Activated CD4-positive, alpha-beta memory T cell treated with anti-CD3 and anti-CD28 coated beads for 36 hours (primary cell): ENCODE measurements at regions of chr14 and their contacts with region 1.

Region 1: DNA sequence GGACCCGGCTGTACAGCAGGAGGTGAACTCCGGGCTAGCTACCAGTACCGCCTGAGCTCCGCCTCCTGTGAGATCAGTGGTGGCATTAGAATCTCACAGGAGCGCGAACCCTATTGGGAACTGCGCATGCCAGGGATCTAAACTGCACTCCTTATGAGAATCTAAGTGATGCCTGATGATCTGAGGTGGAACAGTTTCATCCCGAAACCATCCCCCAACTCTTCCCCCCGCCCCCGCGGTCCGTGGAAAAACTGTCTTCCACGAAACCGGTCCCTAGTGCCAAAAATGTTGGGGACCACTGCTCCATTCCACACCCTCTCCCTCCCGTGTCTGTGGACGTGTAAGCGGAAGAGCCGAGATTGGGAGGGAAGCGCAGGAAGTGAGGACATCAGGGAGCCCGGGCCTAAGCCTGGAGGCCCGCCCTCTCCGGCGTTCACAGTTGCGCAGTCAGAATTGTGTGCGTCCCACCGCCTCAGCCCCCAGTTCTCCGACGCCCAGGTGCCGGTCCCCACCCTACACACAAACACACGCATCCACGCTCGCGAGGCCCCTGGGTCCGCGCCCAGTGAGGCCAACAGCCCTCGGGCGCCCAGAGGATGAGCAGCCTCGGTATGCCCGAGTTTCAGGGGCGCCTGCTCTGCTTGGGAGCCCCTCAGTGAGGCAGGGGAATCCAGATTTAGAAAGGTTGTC is 1.8 kb upstream of the RNASE4 start:
- DNase-seq: peak; percentile 85
- H3K4me3 Mint-ChIP-seq: no peak overlapping the region
- H3K27ac Mint-ChIP-seq: no peak overlapping the region
- H3K4me1 Mint-ChIP-seq: peaks cover 27% of the 10 kb centered on the region
- H3K27me3 Mint-ChIP-seq: no peaks in the 10 kb centered on the region

Region 2: DNA sequence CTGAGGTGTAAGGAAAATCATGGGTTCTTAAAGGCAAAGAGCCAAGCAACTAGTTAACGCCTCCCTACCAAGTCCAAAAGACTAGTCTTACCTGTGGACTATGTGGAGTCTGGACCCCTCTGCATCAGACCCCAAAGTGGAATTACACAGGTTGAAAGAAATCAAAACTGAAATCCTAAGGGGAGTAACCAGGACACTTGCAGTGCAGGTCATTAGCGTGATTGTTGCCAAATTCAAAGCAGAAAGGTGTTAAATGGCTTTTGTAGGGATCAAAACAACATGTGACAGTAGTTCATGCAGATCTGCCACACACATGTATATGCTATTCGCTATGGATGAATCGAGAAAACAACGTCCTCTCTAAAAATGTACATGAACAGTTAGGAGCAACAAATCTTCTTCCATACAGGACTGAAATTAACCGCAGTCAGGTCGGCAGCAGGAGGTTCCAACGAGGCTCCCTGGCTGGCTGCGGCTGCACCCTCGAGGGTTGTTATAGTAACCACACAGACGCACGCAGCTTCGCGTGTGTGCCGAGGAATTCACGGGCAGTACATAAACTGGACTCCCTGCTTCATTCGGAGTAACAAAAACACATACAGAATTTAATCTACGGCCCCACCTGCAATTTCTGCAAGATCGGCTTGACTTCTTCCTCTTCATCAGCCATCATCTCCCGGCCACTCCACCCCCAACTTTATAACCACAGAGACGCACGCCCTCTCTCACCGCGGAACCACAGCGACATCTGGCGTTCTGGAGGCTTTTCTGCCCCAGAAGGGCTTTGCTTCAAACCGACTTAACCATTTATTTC is 377.1 kb before region 1 on chr14 and contains the start of gene TTC5:
- CTCF ChIA-PET with region 1: interaction called, 3 read pairs
- POLR2A ChIA-PET with region 1: no interaction called
- intact Hi-C with region 1: loop called (anchors 2 kb)
- DNase-seq: peak; percentile 93
- H3K4me3 Mint-ChIP-seq: peak within 1 kb of the TSS; percentile 89
- H3K27ac Mint-ChIP-seq: peak within 1 kb of the TSS; percentile 80
- H3K4me1 Mint-ChIP-seq: peaks cover 24% of the 10 kb centered on the region
- H3K27me3 Mint-ChIP-seq: no peaks in the 10 kb centered on the region
- total RNA-seq, gene TTC5: 19.0 to 22.7 TPM

Region 3: GRCh38 chr14:20413045-20413799 is 269.4 kb before region 1 on chr14 and contains the start of gene TEP1:
- CTCF ChIA-PET with region 1: interaction called, 3 read pairs
- POLR2A ChIA-PET with region 1: no interaction called
- intact Hi-C with region 1: loop called (anchors 2 kb)
- DNase-seq: peak; percentile 87
- H3K4me3 Mint-ChIP-seq: peak within 1 kb of the TSS; percentile 93
- H3K27ac Mint-ChIP-seq: peak within 1 kb of the TSS; percentile 96
- H3K4me1 Mint-ChIP-seq: peaks cover 40% of the 10 kb centered on the region
- H3K27me3 Mint-ChIP-seq: no peaks in the 10 kb centered on the region
- total RNA-seq, gene TEP1: 47.1 to 49.3 TPM

Region 4: DNA sequence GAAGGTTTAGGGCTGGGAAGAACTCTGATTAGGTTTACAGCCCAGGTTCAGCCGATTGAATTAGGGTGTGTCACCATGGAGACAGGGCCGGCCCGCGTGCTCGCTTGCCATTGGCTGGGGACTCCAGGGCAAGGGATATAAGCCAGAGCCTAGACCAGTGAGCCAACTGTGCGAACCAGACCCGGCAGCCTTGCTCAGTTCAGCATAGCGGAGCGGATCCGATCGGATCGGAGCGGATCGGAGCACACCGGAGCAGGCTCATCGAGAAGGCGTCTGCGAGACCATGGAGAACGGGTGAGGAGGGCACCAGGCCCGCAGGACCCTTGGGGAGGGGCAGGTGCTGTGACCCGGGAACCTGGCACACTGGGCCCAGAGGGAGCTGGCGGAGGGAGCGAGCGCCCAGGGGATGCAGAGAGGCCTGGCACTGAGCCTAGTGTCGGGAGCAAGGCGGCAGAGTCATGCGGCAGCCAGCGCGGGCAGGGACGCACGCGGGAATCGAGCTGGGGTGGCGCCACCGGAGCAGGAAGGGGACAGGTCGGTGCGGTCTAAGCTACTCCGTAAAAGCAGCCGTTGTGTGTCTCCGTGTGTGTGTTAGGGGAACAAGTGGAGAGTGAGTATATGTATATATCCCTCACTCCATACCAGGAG is 213.2 kb before region 1 on chr14 and contains the start of gene PNP:
- CTCF ChIA-PET with region 1: no interaction called
- POLR2A ChIA-PET with region 1: no interaction called
- intact Hi-C with region 1: loop called (anchors 1 kb)
- DNase-seq: peak; percentile 93
- H3K4me3 Mint-ChIP-seq: peak within 1 kb of the TSS; percentile 89
- H3K27ac Mint-ChIP-seq: peak within 1 kb of the TSS; percentile 99
- H3K4me1 Mint-ChIP-seq: peaks cover 39% of the 10 kb centered on the region
- H3K27me3 Mint-ChIP-seq: no peaks in the 10 kb centered on the region
- total RNA-seq, gene PNP: 178 to 179 TPM

Region 5: GRCh38 chr14:20652996-20653975 is 29.3 kb before region 1 on chr14:
- CTCF ChIA-PET with region 1: interaction called, 30 read pairs
- POLR2A ChIA-PET with region 1: interaction called, 3 read pairs
- intact Hi-C with region 1: loop called (anchors 1 kb)
- DNase-seq: peak; percentile 85
- H3K4me3 Mint-ChIP-seq: peak overlapping the region; percentile 63
- H3K27ac Mint-ChIP-seq: no peak overlapping the region
- H3K4me1 Mint-ChIP-seq: peaks cover 22% of the 10 kb centered on the region
- H3K27me3 Mint-ChIP-seq: peaks cover 53% of the 10 kb centered on the region

Region 6: GRCh38 chr14:20707622-20708021 is 25.0 kb after region 1 on chr14:
- CTCF ChIA-PET with region 1: no interaction called
- POLR2A ChIA-PET with region 1: no interaction called
- intact Hi-C with region 1: no loop called
- DNase-seq: no peak
- H3K4me3 Mint-ChIP-seq: no peak overlapping the region
- H3K27ac Mint-ChIP-seq: no peak overlapping the region
- H3K4me1 Mint-ChIP-seq: no peaks in the 10 kb centered on the region
- H3K27me3 Mint-ChIP-seq: no peaks in the 10 kb centered on the region

Region 7: DNA sequence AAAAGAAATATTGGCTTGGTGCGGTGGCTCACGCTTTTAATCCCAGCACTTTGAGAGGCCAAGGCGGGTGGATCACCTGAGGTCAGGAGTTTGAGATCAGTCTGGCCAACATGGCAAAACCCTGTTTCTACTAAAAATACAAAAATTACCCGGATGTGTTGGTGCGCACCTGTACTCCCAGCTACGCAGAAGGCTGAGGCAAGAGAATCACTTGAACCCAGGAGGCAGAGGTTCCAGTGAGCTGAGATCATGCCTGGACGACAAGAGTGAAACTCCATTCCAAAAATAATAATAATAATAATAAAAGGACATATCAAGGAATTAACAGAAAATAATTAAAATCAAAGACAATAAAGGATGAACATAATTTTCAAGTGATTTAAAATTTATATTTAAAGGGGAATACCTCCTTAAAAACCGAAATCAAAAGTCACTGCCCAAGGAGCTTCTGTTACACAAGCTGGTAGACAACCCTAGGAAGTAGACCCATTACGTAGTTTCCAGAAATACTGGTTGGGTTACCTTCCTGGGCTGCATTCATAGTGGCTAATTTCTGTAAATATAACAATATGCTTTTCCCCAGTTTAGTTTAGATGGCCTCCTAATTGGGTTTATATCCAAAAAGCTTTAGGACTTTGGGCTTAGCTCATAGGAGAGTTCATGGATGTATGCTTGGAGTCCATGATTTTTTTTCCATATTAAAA is 60.8 kb after region 1 on chr14:
- CTCF ChIA-PET with region 1: no interaction called
- POLR2A ChIA-PET with region 1: no interaction called
- intact Hi-C with region 1: no loop called
- DNase-seq: no peak
- H3K4me3 Mint-ChIP-seq: no peak overlapping the region
- H3K27ac Mint-ChIP-seq: no peak overlapping the region
- H3K4me1 Mint-ChIP-seq: no peaks in the 10 kb centered on the region
- H3K27me3 Mint-ChIP-seq: peaks cover 4% of the 10 kb centered on the region

Region 8: DNA sequence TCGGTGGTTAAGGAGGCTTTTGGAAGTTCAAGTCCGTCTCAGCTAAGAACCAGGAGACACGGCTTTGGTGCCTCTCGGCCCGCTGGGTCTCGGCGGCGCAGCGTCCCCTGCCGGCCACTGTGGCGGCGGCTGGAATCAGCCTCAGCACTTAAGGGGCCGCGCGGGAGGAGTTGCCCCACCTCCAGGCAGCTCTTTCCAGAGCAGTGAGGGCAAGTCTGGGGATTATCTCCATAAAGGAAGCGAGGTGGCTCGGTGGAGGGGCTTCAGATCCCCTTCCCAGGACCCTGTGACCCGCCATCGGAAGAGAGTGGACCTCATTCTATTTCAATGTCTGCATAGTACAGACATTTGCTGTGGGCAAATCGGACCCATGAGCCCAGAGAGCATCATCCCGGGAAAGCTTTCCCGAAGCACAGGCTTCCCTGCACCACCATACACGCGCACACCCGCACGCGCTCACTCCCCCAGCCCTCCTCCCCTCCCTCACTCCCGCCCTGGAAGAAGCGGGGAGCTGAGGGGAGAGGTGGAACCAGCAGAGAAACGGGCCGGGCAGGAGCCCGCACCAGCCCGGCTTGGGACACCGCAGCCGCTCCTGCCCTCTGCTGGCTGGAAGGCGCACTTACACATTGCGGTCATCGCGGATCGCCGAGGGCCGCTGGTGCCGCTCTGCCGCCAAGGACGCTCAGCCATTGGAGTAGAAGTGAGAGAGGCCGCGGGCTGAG is 288.6 kb after region 1 on chr14:
- CTCF ChIA-PET with region 1: interaction called, 5 read pairs
- POLR2A ChIA-PET with region 1: no interaction called
- intact Hi-C with region 1: loop called (anchors 5 kb)
- DNase-seq: peak; percentile 86
- H3K4me3 Mint-ChIP-seq: peak overlapping the region; percentile 84
- H3K27ac Mint-ChIP-seq: no peak overlapping the region
- H3K4me1 Mint-ChIP-seq: peaks cover 11% of the 10 kb centered on the region
- H3K27me3 Mint-ChIP-seq: peaks cover 25% of the 10 kb centered on the region

Region 9: DNA sequence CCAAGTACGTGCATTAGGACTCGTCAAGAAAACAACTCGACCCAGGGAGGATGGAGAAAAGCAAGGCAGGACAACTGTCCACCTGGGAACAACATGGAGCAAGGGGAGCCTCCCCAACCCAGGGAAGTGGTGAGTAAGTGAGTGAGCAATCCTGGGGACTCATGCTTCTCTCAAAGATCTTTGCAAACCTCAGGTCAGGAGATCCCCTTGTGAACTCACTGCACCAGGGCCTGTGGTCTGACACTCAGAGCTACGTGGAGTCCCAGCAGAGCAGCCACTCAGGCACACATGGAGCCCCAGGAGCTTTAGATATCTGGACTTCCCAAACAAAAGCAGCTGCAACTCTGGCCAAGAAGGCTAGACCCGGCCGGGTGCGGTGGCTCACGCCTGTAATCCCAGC is 485.5 kb after region 1 on chr14:
- CTCF ChIA-PET with region 1: no interaction called
- POLR2A ChIA-PET with region 1: no interaction called
- intact Hi-C with region 1: no loop called
- DNase-seq: no peak
- H3K4me3 Mint-ChIP-seq: no peak overlapping the region
- H3K27ac Mint-ChIP-seq: no peak overlapping the region
- H3K4me1 Mint-ChIP-seq: no peaks in the 10 kb centered on the region
- H3K27me3 Mint-ChIP-seq: peaks cover 20% of the 10 kb centered on the region